Lower leg skin (tissue), 4 donors: ENCODE measurements at regions of chr13 and their contacts with region 1.

Region 1: GRCh38 chr13:78121459-78122348 is 203.1 kb upstream of the EDNRB start:
- DNase-seq: no peak
- H3K4me3 ChIP-seq: no peak overlapping the region
- CTCF ChIP-seq: peak in 1 of 3 donors; percentile 48
- POLR2A ChIP-seq: no peak

Region 2: DNA sequence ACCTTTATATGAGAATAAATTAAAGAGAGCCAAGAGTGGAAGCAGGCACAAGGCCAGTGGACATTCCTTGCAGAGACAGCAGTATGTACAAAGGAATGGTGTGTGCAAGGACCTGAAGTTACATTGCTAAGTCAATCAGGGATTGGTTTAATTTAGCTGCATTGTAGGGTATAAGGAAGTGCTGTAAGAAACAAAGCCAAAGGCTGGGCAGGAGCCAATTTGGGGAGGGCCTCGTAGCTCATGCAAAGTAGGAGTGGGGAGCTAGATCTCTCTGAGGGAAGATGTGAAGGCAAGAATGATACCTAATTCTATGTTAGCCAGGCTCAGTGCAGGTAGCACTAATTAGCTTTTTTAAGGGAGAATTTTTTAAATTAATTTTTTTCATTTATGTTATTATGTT is 347.5 kb before region 1 on chr13:
- intact Hi-C with region 1: loop called (anchors 5 kb)
- DNase-seq: no peak
- H3K4me3 ChIP-seq: no peak overlapping the region
- CTCF ChIP-seq: no peak
- POLR2A ChIP-seq: no peak

Region 3: GRCh38 chr13:78036841-78037240 is 84.9 kb before region 1 on chr13:
- intact Hi-C with region 1: no loop called
- DNase-seq: no peak
- H3K4me3 ChIP-seq: no peak overlapping the region
- CTCF ChIP-seq: no peak
- POLR2A ChIP-seq: no peak

Region 4: DNA sequence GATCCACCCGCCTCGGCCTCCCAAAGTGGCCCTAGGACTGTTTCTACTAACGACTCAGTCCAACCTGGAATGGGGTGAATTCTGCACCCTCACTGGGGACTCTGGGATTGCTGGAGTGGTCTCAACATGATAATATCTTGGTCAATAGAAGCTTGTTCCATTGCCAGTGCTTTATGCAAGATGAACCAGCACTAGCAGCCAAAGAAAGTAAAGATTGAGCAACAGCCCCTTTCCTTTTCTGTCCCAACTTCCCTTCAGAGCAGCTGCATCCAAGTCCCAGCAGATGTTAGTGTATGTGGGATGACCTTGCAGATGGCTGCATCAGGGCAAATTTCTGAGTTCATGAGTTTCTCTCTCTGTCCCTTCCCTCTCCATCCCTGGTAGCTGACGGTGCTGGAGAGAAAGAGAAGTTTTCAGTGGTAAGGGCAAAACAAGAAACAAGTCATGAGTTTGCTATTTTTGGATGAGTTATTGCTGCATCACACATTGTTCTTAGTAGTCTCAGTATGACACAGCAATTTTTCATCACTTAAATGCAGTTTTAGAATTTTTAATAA is 19.5 kb before region 1 on chr13:
- intact Hi-C with region 1: no loop called
- DNase-seq: peak in 1 of 2 donors; percentile 47
- H3K4me3 ChIP-seq: no peak overlapping the region
- CTCF ChIP-seq: no peak
- POLR2A ChIP-seq: no peak